CD8-positive, alpha-beta memory T cell (primary cell): ENCODE measurements at regions of chr16 and their contacts with region 1.

Region 1: GRCh38 chr16:67719048-67719777 is at the start of gene GFOD2:
- DNase-seq: peak; percentile 96 to 99 (median 98)
- H3K4me3 ChIP-seq: peak within 1 kb of the TSS; percentile 99
- H3K4me3 Mint-ChIP-seq: peak within 1 kb of the TSS; percentile 89 to 97 (median 96)
- H3K27ac ChIP-seq: peak within 1 kb of the TSS; percentile 88
- H3K27ac Mint-ChIP-seq: peak within 1 kb of the TSS; percentile 97 to 100 (median 99)
- H3K4me1 ChIP-seq: peaks cover 19% of the 10 kb centered on the region
- H3K4me1 Mint-ChIP-seq: peaks cover 28 to 49% (median 45%) of the 10 kb centered on the region in 3 donors
- H3K27me3 ChIP-seq: no peaks in the 10 kb centered on the region
- H3K27me3 Mint-ChIP-seq: no peaks in the 10 kb centered on the region
- total RNA-seq, gene GFOD2: 21.3 to 23.7 TPM

Region 2: GRCh38 chr16:67806428-67807147 is 87.4 kb after region 1 on chr16 and contains the starts of genes RANBP10 and TSNAXIP1:
- CTCF ChIA-PET with region 1: interaction called, 5 read pairs
- POLR2A ChIA-PET with region 1: interaction called, 11 read pairs
- DNase-seq: peak; percentile 95 to 98 (median 96)
- H3K4me3 ChIP-seq: peak within 1 kb of the TSS; percentile 85
- H3K4me3 Mint-ChIP-seq: peak within 1 kb of the TSS; percentile 86 to 97 (median 94)
- H3K27ac ChIP-seq: peak within 1 kb of the TSS; percentile 80
- H3K27ac Mint-ChIP-seq: peak within 1 kb of the TSS; percentile 83 to 97 (median 94)
- H3K4me1 ChIP-seq: peaks cover 35% of the 10 kb centered on the region
- H3K4me1 Mint-ChIP-seq: peaks cover 33 to 44% (median 37%) of the 10 kb centered on the region in 3 donors
- H3K27me3 ChIP-seq: no peaks in the 10 kb centered on the region
- H3K27me3 Mint-ChIP-seq: no peaks in the 10 kb centered on the region
- total RNA-seq, gene RANBP10: 18.9 to 20.0 TPM
- total RNA-seq, gene TSNAXIP1: 1.2 to 1.5 TPM

Region 3: DNA sequence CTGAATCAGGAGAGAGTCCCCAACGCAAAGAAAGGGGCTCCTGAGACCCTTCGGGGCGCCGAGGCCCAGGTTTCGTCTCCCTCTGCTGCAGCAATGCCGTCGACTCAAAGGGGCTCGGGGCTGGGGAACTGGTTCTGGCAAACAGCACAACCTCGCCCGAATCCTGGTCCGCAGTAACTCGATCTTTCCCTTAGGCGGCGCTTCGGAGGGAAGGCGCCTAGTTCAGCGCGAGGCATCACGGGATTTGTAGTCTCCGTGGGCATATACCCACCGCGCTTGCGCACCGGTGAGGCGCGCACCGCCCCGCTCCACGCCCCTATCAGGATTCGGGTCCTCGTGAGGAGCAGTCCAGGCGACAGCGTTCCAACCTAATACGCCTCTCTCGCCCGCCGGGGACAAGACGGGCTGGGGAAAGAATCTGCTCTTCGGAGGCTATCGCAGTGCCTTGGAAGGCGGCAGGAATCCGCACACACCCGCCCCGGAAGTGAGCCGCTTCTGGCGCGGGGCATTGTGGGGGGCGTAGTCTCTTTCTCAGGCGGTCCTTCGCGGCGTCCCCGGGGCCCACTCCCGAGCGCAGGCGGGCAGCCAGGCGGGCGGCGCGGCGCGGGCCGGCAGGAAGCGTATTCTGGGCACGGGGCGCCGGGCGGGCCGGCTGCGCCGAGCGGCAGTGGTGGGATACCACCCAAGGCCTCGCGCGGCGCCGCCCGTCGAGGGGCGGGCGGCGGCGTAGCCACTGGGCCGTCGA is 122.7 kb after region 1 on chr16 and contains the start of gene THAP11:
- CTCF ChIA-PET with region 1: no interaction called
- POLR2A ChIA-PET with region 1: no interaction called
- DNase-seq: peak; percentile 89 to 97 (median 95)
- H3K4me3 ChIP-seq: peak within 1 kb of the TSS; percentile 99
- H3K4me3 Mint-ChIP-seq: peak within 1 kb of the TSS; percentile 94 to 99 (median 96)
- H3K27ac ChIP-seq: peak within 1 kb of the TSS; percentile 90
- H3K27ac Mint-ChIP-seq: peak within 1 kb of the TSS; percentile 95 to 99 (median 98)
- H3K4me1 ChIP-seq: peaks cover 41% of the 10 kb centered on the region
- H3K4me1 Mint-ChIP-seq: peaks cover 33 to 43% (median 39%) of the 10 kb centered on the region in 3 donors
- H3K27me3 ChIP-seq: no peaks in the 10 kb centered on the region
- H3K27me3 Mint-ChIP-seq: no peaks in the 10 kb centered on the region
- total RNA-seq, gene THAP11: 52.6 to 55.1 TPM